Transverse colon (tissue), 4 donors: ENCODE measurements at regions of chr9 and their contacts with region 1.

Region 1: GRCh38 chr9:5708414-5708813 is 79.5 kb downstream of the RIC1 start:
- DNase-seq: no peak
- H3K4me3 ChIP-seq: no peak overlapping the region
- H3K27ac ChIP-seq: no peak overlapping the region
- H3K4me1 ChIP-seq: peaks cover 0 to 6% (median 0%) of the 10 kb centered on the region in 4 donors
- H3K27me3 ChIP-seq: no peaks in the 10 kb centered on the region
- CTCF ChIP-seq: no peak
- EP300 ChIP-seq: no peak
- POLR2A ChIP-seq: no peak

Region 2: GRCh38 chr9:5644501-5644900 is 63.9 kb before region 1 on chr9:
- in situ Hi-C with region 1: loop called in 1 of 4 experiments (anchors 10 kb)
- intact Hi-C with region 1: no loop called
- DNase-seq: no peak
- H3K4me3 ChIP-seq: no peak overlapping the region
- H3K27ac ChIP-seq: no peak overlapping the region
- H3K4me1 ChIP-seq: peaks cover 0 to 26% (median 0%) of the 10 kb centered on the region in 4 donors
- H3K27me3 ChIP-seq: no peaks in the 10 kb centered on the region
- CTCF ChIP-seq: no peak
- EP300 ChIP-seq: no peak
- POLR2A ChIP-seq: no peak